ENCODE measurements at regions of chr3 and their contacts with region 1.

Region 1: DNA sequence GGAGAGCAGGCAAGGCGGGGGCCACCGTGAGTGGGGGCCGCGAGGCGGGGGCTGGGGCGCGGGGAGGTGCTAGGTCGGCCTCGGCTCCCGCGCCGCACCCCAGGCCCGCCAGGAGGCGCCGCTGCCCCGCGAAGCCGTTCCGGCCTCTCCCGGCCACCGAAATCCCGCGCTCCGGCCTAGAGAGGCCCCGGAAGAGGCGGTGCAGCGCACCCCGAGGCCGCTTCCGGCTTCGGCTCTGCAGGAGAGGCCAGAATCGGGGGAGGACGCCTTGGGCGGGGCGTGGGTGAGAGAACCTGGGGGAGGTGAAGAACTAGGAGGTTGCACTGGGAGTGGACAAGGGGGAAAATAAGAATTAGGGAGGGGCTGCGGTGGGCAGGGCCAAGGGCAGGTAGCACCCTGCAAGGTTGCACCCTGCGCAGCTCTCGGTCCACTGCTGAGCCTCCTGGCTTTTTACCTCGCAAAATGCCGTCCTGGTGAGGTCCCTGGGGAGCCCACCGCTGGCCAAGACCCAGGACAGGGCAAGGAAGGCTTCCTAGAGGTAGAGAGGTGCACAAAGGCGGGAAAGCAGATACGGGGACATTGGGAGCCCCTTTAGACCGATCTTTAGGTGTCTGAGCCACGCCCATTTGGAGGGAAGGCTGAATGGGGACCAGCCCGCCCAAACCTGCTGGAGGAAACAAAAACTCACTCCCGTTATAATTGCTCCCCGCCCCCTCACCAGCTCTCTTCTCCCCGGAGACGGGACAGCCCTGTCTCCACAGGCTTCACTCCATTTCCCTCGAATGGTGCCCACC is 8.4 kb upstream of the GNAI2 start:
- DNase-seq: no peak
- H3K4me3 ChIP-seq: peak overlapping the region; percentile 83
- H3K27me3 ChIP-seq: peaks cover 7% of the 10 kb centered on the region
- CTCF ChIP-seq: peak; percentile 54

Region 2: DNA sequence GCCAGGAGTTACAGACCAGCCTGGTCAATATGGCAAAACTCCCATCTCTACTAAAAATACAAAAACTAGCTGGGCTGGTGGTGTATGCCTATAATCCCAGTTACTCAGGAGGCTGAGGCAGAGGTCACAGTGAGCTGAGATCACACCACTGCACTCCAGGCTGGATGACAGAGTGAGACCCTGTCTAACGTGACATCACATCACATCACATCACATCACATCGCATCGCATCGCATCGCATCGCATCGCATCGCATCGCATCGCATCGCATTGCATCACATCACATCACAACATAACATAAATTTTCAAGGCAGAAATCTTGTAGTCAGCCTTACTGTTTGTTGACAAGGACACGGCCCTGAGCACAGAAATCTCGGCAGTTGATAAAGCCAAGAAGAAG is 243.2 kb before region 1 on chr3:
- CTCF ChIA-PET with region 1: no interaction called
- POLR2A ChIA-PET with region 1: no interaction called
- DNase-seq: no peak
- H3K4me3 ChIP-seq: no peak overlapping the region
- H3K27me3 ChIP-seq: no peaks in the 10 kb centered on the region
- CTCF ChIP-seq: no peak

Region 3: DNA sequence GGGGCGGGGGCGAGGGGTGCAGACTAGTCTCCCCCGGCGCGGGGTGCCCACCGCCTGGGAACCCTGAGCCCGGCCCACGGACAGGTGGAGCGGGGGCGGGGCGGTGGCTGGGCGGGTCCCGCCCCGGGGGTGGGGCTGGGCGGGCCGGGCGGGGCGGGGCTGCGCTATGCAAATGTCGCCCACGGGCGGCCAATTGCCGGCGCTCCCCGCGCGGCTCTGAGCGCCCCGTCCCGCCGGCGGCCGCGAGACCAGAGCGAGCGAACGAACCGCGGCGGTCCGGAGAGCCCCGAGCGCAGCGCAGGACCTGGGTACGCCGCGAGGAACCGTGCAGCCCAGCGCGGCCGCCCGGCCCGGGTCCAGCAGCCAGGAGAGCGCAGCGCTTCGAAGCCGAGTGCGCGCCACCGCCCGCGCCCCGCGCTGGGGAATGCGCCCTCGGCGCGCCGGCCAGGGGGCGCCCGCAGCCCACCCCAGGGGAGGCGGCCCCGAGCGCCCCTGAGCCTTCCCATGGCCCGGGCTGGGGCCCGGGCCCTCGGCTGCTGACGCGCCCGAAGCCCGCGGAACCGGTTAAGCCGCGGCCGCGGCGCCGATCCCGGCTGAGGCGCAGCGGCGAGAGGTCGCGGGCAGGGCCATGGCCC is 72.6 kb before region 1 on chr3 and contains the start of gene SEMA3F:
- CTCF ChIA-PET with region 1: interaction called, 13 read pairs
- POLR2A ChIA-PET with region 1: no interaction called
- DNase-seq: no peak
- H3K4me3 ChIP-seq: peak within 1 kb of the TSS; percentile 43
- H3K27me3 ChIP-seq: peaks cover 4% of the 10 kb centered on the region; the same call in 1 of the 2 replicates
- CTCF ChIP-seq: no peak
- polyA plus RNA-seq, gene SEMA3F: 7.4 and 11.4 TPM in 2 replicates

Region 4: GRCh38 chr3:50205414-50206276 is 21.9 kb before region 1 on chr3:
- CTCF ChIA-PET with region 1: interaction called, 45 read pairs
- POLR2A ChIA-PET with region 1: no interaction called
- DNase-seq: no peak
- H3K4me3 ChIP-seq: peak overlapping the region; percentile 27
- H3K27me3 ChIP-seq: peaks cover 42% of the 10 kb centered on the region
- CTCF ChIP-seq: no peak

Region 5: GRCh38 chr3:50245831-50246516 is 18.4 kb after region 1 on chr3:
- CTCF ChIA-PET with region 1: interaction called, 114 read pairs
- POLR2A ChIA-PET with region 1: no interaction called
- DNase-seq: no peak
- H3K4me3 ChIP-seq: peak overlapping the region; percentile 34
- H3K27me3 ChIP-seq: no peaks in the 10 kb centered on the region
- CTCF ChIP-seq: peak; percentile 100

Region 6: GRCh38 chr3:50272911-50273693 is 45.5 kb after region 1 on chr3:
- CTCF ChIA-PET with region 1: interaction called, 55 read pairs
- POLR2A ChIA-PET with region 1: interaction called, 12 read pairs
- DNase-seq: no peak
- H3K4me3 ChIP-seq: no peak overlapping the region
- H3K27me3 ChIP-seq: no peaks in the 10 kb centered on the region
- CTCF ChIP-seq: peak; percentile 97

Region 7: DNA sequence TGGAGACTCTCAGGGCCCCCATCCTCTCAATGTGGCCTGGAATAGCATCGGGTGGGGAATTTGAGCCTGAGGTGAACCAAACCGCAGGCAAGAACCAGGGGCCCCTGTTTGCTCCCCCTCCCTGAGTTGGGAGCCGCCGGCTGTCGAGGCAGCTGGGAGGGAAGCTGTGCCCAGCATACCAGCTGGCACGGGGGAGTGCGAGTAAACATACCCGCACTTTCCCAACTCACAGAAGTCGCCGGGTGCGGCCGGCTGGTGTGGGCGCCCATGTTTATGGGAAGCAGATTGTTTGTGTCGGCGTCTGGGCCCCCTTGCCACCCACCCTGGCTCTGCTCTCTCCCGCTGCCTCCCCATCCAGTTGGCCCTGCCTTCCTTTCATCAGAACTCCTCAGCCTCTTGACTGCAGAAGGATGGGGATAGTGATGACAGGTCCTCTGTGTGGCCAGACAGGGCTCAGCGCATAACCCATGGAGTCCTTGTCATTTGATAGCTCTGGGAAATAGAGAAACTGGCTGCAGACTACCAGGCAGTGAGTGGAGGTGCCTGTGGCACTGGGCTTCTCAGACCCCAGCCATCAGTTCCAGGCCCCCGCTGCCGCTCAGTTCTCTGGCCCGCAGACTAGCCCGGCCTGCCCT is 215.5 kb after region 1 on chr3:
- CTCF ChIA-PET with region 1: no interaction called
- POLR2A ChIA-PET with region 1: no interaction called
- DNase-seq: no peak
- H3K4me3 ChIP-seq: no peak overlapping the region
- H3K27me3 ChIP-seq: peaks cover 10% of the 10 kb centered on the region
- CTCF ChIP-seq: no peak